ENCODE measurements at regions of chr13 and their contacts with region 1.

Region 1: DNA sequence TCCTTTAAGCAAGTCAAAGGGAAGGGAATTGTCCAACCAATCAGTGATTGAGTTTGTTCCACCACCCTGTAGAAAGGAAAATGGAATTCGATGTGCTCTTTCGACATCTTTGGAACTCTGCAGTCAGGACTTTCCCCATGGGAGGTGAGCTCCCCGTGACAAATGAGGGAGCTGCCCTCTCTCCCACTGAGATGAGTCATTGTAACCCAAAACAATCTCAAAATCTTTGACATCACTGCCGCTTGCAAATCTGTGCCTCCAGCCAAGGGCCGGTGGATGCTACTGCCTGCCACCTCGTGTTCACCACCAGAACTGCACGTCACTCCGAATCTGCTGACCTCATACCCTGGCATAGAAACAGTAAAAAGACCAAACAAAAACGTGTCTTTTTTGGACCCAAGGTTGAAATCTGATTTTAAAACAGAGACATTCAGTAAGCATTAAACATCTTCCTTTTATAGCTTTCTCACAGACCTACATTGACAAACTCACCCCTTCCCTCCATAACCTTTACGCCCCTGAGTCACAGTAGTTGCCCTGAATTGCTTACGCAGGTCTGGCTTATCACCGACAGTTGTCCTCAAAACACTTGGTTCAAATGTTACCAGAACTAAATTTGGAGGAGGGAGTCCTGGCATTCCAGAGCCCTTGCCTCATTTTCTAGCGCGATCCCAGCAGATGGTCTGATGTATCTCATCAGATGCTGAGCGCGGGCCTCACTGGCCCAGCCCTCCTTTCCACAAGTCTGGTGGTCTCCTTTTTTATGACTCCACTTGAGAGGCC is 105.2 kb downstream of the COL4A2 start:
- DNase-seq: peak; percentile 88
- H3K4me3 Mint-ChIP-seq: no peak overlapping the region
- H3K27ac Mint-ChIP-seq: no peak overlapping the region
- H3K4me1 Mint-ChIP-seq: peaks cover 8% of the 10 kb centered on the region
- H3K27me3 Mint-ChIP-seq: peaks cover 72% of the 10 kb centered on the region

Region 2: GRCh38 chr13:108961542-108962125 is 1450.7 kb before region 1 on chr13:
- intact Hi-C with region 1: loop called (anchors 5 kb)
- DNase-seq: peak; percentile 74
- H3K4me3 Mint-ChIP-seq: no peak overlapping the region
- H3K27ac Mint-ChIP-seq: no peak overlapping the region
- H3K4me1 Mint-ChIP-seq: peaks cover 2% of the 10 kb centered on the region
- H3K27me3 Mint-ChIP-seq: peaks cover 2% of the 10 kb centered on the region

Region 3: DNA sequence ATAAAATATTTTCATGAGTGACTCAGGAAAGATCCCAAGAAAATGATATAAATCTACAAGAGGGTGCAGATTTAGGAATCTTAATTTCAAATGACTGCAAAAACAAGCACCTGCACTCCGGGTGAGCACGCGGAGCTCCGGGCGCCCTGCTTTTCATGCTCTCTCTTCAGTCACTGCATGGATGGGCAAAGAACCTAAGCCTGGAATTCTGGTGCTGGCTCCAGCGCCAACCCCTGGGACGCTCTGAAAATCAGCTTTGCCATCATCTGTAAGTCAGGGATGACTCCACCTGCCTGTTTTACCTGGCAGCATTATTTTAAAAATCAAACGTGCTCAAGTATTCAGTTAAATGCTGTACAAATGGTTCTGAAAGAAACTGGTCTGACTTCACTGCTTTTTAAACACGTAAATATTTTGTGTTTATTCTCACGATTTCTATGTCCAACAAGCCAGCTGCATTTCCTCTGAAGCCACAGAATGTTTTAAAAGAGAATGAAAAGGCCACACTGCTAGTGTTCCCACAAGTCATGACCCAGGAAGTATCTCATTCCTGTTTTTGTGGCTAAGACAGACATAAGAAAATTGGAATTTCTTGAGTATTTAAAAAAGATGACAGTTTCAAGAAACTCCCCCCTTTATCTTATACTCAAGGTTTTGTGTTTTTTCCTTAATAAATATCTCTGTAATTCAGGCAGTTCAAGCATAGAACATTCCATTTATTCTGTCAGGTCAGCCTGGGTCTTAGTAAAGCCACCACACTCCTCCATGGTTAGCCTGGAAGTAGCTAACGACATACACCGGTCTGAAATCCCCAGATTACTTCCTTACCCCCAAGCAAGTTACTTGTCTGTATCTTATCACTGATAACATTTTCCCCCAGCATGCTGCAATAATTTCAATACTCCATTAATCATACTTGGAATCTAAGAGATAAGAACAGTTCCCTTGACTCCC is 186.4 kb before region 1 on chr13:
- intact Hi-C with region 1: loop called (anchors 1 kb)
- DNase-seq: no peak
- H3K4me3 Mint-ChIP-seq: no peak overlapping the region
- H3K27ac Mint-ChIP-seq: no peak overlapping the region
- H3K4me1 Mint-ChIP-seq: no peaks in the 10 kb centered on the region
- H3K27me3 Mint-ChIP-seq: peaks cover 15% of the 10 kb centered on the region

Region 4: GRCh38 chr13:110306960-110307746 is 105.2 kb before region 1 on chr13 and contains the starts of genes COL4A1 and COL4A2:
- intact Hi-C with region 1: loop called (anchors 5 kb)
- DNase-seq: no peak
- H3K4me3 Mint-ChIP-seq: peak within 1 kb of the TSS; percentile 51
- H3K27ac Mint-ChIP-seq: no peak within 1 kb of the TSS
- H3K4me1 Mint-ChIP-seq: peaks cover 5% of the 10 kb centered on the region
- H3K27me3 Mint-ChIP-seq: peaks cover 75% of the 10 kb centered on the region
- total RNA-seq, gene COL4A1: not detected in 2 replicates
- total RNA-seq, gene COL4A2: not detected in 2 replicates

Region 5: DNA sequence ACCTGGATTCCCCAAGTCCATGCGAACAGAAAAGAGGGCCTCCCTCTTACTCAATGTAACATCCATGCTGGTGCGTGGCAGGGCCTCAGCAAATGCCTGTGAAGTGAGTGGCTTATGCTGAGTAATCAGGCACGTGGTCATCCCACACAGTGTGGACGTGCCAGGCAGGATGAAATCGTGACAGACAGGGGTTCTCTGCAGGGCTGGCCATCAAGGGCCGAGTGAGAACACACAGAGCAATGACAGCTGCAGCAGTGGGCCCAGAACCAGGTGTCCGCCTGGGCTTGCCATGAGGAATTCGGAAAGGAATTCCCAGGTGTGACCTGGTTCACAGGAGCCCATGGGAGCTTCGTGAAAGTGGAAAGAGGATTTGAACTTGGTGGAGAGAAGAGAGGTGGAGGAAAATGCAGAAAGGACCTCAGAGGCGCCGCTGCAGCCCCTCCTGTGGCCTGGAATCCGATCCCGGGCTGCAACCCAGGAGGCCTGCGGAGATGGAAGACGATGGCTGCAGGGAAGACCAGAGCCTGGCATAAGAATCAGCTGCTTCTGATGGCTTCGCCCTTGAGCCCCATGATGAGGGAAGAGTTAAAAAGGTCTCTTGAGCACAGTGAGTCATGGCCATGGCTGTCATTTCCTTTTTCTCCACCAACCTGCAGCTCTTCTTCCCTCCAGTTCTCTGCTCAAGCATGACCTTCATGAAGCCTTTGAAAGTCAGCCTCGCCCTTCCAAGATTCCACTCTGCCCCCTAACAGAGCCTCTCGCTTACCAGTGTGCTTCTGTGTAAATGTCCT is 1620.1 kb after region 1 on chr13:
- intact Hi-C with region 1: no loop called
- DNase-seq: no peak
- H3K4me3 Mint-ChIP-seq: no peak overlapping the region
- H3K27ac Mint-ChIP-seq: no peak overlapping the region
- H3K4me1 Mint-ChIP-seq: no peaks in the 10 kb centered on the region
- H3K27me3 Mint-ChIP-seq: no peaks in the 10 kb centered on the region